Activated T-helper 1 cell treated with anti-CD3 and anti-CD28 coated beads, Interleukin-12 subunit alpha, Interleukin-12 subunit beta, Interleukin-2, Interleukin-4 antibody, amounts not matched to agents 30 ng/mL and 10 ng/mL and 1 ng/mL, durations not matched to agents 14 hours and 24 hours and 36 hours (primary cell): ENCODE measurements at regions of chr5 and their contacts with region 1.

Region 1: GRCh38 chr5:79612667-79613198 is 492 bp downstream of the TENT2 start:
- DNase-seq: no peak
- H3K4me3 Mint-ChIP-seq: peak overlapping the region; percentile 91
- H3K27ac Mint-ChIP-seq: peak overlapping the region; percentile 97
- H3K4me1 Mint-ChIP-seq: peaks cover 45% of the 10 kb centered on the region
- H3K27me3 Mint-ChIP-seq: no peaks in the 10 kb centered on the region

Region 2: DNA sequence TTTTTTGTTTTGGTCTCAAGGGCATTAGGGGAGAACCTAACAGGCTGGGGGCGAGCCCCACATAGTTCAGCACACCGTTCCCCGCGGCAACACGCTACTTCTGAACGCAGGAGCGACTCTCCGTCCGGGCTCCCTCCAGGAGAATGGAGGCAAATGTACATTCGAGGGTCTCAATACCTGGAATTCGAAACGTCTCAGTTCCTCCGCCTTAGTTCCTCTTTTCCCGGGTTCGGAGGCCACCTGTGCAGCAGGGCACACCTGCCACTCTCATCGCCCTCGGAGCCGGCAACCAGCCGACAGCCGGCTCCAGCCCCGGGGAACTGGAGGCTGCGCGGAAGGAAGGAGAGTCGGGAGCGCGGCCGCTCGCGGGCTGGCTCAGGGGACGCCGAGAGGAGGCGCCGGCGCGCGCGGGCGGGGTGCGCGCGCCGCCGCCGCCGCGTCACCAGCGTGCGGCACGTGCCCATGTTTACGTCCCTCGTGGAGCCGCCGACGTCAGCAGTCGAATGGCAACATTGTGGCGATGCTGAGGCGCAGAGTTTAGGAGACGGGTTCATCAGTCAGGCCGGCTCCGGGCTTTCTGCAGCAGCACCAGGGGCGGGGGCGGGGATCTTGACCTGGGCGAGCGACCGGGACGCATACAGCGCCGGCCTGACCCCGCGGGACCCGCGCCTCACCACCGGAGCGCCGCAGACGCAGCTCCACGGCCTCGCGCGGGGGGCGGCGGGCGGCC is 376.9 kb before region 1 on chr5 and contains the start of gene JMY:
- intact Hi-C with region 1: loop called (anchors 5 kb)
- DNase-seq: peak; percentile 77
- H3K4me3 Mint-ChIP-seq: peak within 1 kb of the TSS; percentile 94
- H3K27ac Mint-ChIP-seq: peak within 1 kb of the TSS; percentile 95
- H3K4me1 Mint-ChIP-seq: peaks cover 33% of the 10 kb centered on the region
- H3K27me3 Mint-ChIP-seq: peaks cover 2% of the 10 kb centered on the region
- total RNA-seq, gene JMY: 5.5 and 5.9 TPM in 2 replicates

Region 3: DNA sequence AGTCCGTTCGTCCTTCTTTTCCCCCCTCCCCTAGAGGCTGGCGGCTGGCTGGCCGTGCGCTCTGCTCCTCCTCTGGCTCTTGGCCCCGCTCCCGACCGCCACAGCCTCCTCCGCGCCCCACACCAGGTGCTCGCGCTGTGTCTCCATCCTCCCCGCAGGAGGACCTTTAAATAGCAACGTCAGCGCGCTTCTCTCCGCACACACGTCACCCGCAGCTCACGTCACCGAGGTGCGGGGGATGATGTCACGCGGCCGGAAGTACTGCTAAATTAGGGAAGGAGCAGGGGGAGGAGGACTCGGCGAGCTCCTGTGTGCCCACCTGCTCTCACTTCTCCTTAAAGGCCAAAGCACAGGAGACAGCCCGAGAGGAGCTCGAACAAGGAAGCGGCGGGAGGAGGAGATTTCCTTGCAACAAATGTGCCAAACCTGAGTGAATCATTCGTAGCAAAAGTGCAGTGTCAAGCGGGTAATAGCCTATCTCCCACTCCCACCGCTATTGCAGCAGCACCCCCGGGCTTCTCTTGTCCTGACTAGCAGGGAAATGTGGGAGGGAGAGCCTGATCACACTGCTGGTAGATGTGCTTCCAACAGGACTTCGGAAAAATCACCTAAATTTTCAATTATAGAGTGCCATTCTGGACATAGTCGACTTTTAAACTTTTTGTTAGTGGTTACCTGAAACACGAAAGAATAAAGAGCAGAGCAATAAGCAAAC is 98.2 kb before region 1 on chr5:
- intact Hi-C with region 1: loop called (anchors 1 kb)
- DNase-seq: peak; percentile 88
- H3K4me3 Mint-ChIP-seq: peak overlapping the region; percentile 99
- H3K27ac Mint-ChIP-seq: peak overlapping the region; percentile 100
- H3K4me1 Mint-ChIP-seq: peaks cover 43% of the 10 kb centered on the region
- H3K27me3 Mint-ChIP-seq: peaks cover 26% of the 10 kb centered on the region

Region 4: DNA sequence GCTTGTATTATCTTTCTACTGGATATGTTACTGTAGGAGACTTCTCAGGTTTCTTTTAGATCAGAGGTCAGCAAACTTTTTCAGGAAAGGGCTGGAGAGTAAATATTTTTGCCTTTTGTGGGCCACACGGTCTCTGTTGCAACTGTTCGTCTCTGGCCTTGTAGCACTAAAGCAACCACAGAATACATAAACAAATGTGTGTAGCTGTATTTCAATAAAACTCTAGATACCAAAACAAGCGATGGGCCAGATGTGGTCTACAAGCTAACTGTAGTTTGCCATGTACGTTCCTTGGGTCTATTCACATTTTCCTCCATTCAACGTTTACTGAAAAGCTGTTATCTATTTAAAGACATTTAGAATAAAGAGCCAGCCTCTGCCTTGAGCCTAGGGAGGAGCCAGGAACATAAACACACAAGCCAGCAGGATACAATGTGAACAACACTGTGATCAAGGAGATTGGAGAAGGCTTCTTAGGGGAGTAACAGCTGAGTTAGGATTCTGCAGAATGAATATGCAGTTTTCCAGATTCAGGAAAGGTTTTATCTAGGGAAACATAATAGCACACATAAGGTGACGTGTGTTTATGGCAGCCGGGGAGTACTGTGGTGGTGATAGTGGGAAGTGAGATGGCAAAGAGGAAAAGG is 65.8 kb before region 1 on chr5:
- intact Hi-C with region 1: no loop called
- DNase-seq: no peak
- H3K4me3 Mint-ChIP-seq: no peak overlapping the region
- H3K27ac Mint-ChIP-seq: no peak overlapping the region
- H3K4me1 Mint-ChIP-seq: no peaks in the 10 kb centered on the region
- H3K27me3 Mint-ChIP-seq: no peaks in the 10 kb centered on the region

Region 5: GRCh38 chr5:79642212-79642611 is 29.5 kb after region 1 on chr5:
- intact Hi-C with region 1: loop called (anchors 5 kb)
- DNase-seq: no peak
- H3K4me3 Mint-ChIP-seq: no peak overlapping the region
- H3K27ac Mint-ChIP-seq: no peak overlapping the region
- H3K4me1 Mint-ChIP-seq: peaks cover 21% of the 10 kb centered on the region
- H3K27me3 Mint-ChIP-seq: no peaks in the 10 kb centered on the region